ENCODE measurements at regions of chr11 and their contacts with region 1.

Region 1: GRCh38 chr11:62911137-62912130 is 9.7 kb downstream of the CHRM1 start:
- DNase-seq: no peak

Region 2: DNA sequence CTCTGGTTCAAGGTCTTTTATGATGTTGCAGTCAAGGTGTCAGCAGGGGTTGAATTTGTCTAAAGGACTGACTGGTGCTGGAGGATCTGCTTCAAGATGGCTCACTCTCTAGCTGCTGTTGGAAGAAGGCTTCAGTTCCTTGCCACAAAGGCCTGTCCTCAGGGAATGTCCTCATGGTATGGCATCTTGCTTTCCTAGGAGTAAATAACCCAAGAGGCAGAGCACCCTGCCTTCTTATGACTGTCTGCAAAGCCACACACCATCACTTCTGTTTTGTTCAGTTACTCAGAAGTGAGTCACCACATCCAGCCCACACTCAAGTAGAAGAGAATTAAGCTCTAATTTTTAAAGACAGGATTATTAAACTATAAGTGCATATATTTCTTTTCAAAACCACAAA is 534.3 kb after region 1 on chr11:
- intact Hi-C with region 1: loop called in 1 of 2 experiments (anchors 5 kb)
- DNase-seq: no peak

Measured in posterior vena cava (tissue), 2 donors.